Motor neuron (in vitro differentiated cells): ENCODE measurements at regions of chr18 and their contacts with region 1.

Region 1: GRCh38 chr18:57434536-57435494 is at the start of gene ONECUT2:
- ATAC-seq: peak; percentile 89 to 96 (median 91)
- H3K4me3 ChIP-seq: peak within 1 kb of the TSS; percentile 51 to 90 (median 55)
- H3K27ac ChIP-seq: peak within 1 kb of the TSS; percentile 31 to 37
- H3K4me1 ChIP-seq: peaks cover 12 to 16% of the 10 kb centered on the region in 2 donors
- total RNA-seq, gene ONECUT2: 0.20 to 27.1 (median 9.5) TPM

Region 2: GRCh38 chr18:56756966-56757365 is 677.8 kb before region 1 on chr18:
- in situ Hi-C with region 1: loop called in 2 of 9 experiments (anchors 25 kb)
- ATAC-seq: no peak
- H3K4me3 ChIP-seq: no peak overlapping the region
- H3K27ac ChIP-seq: no peak overlapping the region
- H3K4me1 ChIP-seq: peaks cover 0 to 5% of the 10 kb centered on the region in 2 donors

Region 3: DNA sequence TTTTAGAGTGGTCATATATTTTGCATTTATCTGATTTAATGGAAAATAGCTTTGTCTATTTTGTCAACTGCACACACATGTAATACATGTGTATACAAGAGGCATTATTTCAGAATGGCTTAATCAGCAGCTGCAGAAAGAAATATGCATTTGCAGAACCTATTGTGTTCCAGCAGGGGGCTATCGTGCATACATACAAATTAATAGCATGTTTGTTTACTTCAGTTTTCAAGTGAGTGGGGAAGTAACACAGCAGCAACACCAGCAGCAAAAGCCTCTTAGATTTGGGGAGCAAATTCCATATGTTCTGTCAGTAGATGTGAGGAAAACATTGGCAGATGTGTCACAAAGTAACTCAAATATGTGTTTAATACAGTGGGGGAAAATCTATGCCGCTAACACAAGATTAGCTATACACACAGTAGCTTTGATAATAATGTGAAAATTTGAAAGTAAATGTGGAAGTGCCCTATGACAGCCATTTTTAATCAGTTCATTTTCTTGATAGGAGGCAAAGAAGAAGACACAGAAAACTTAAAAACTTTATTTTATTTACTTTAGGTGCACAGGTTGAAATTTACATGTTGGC is 565.5 kb before region 1 on chr18:
- in situ Hi-C with region 1: loop called in 1 of 9 experiments (anchors 10 kb)
- ATAC-seq: peak in 5 of 8 experiments; percentile 31 to 71 (median 71)
- H3K4me3 ChIP-seq: no peak overlapping the region
- H3K27ac ChIP-seq: no peak overlapping the region
- H3K4me1 ChIP-seq: peaks cover 13 to 27% of the 10 kb centered on the region in 2 donors